ENCODE measurements at regions of chr9 and their contacts with region 1.

Region 1: DNA sequence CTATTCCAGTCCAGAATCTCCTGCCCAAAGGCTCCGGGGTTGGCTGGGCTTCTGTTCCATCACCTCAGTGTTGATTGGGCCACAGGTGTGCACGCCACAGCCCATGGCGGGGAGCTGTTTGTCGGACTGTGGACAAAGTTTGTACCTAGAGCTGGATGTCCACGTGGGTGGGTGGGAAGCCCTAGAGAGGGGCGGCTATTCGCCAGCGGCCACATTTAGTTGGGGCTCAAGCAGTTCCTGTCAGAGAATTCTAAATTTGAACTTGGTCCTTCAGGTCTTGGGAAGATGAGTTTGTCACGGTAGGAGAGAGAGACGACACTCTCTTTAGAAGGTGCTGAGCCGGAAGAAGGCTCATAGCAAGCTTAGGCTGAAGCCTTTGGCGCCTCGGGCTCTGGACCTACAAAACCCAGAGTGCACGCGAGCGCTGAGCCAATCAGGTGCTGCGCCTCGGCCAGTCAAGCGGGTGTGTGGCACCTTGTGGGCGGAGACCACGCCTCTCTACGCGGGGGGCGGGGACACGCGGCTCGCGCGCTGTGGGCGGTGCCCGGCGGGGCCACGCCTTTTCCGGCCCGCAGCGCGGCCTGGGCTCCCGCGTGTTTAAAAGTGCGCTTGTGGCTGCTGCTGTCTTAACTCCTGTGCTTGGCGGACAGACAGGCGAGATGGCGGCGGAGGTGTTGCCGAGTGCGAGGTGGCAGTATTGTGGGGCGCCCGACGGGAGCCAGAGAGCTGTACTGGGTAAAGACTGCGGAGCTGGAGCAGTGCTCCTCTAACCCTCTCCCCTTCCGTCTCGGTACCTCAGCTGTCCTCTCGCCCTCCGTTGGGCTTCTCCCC is at the start of gene POLR1E:
- DNase-seq: peak; percentile 91 to 97 (median 96)
- ATAC-seq: peak; percentile 94 to 97
- H3K4me3 Mint-ChIP-seq: peak within 1 kb of the TSS; percentile 91 to 100 (median 94)
- H3K27ac Mint-ChIP-seq: peak within 1 kb of the TSS; percentile 89 to 98 (median 94)
- H3K4me1 Mint-ChIP-seq: peaks cover 23 to 44% (median 41%) of the 10 kb centered on the region in 4 donors
- H3K27me3 Mint-ChIP-seq: peaks cover 6 to 13% (median 7%) of the 10 kb centered on the region in 5 donors
- polyA plus RNA-seq, gene POLR1E: 13.3 to 21.2 (median 17.4) TPM

Region 2: GRCh38 chr9:37422289-37423104 is 63.1 kb before region 1 on chr9 and contains the start of gene GRHPR:
- POLR2A ChIA-PET with region 1: interaction called, 15 read pairs
- DNase-seq: peak; percentile 79 to 90 (median 84)
- ATAC-seq: peak; percentile 97 to 98
- H3K4me3 Mint-ChIP-seq: peak within 1 kb of the TSS; percentile 91 to 98 (median 94)
- H3K27ac Mint-ChIP-seq: peak within 1 kb of the TSS; percentile 92 to 98 (median 96)
- H3K4me1 Mint-ChIP-seq: peaks cover 10 to 35% (median 26%) of the 10 kb centered on the region in 4 donors
- H3K27me3 Mint-ChIP-seq: no peaks in the 10 kb centered on the region
- polyA plus RNA-seq, gene GRHPR: 71.5 to 89.3 (median 74.4) TPM

Region 3: GRCh38 chr9:37465249-37466036 is 20.2 kb before region 1 on chr9 and contains the start of gene ZBTB5:
- POLR2A ChIA-PET with region 1: interaction called, 56 read pairs
- DNase-seq: peak; percentile 96 to 100 (median 99)
- ATAC-seq: peak; percentile 81
- H3K4me3 Mint-ChIP-seq: peak within 1 kb of the TSS; percentile 94 to 98 (median 96)
- H3K27ac Mint-ChIP-seq: peak within 1 kb of the TSS; percentile 93 to 99 (median 98)
- H3K4me1 Mint-ChIP-seq: peaks cover 20 to 46% (median 39%) of the 10 kb centered on the region in 4 donors
- H3K27me3 Mint-ChIP-seq: no peaks in the 10 kb centered on the region
- polyA plus RNA-seq, gene ZBTB5: 0.50 to 0.83 (median 0.64) TPM

Region 4: GRCh38 chr9:37565661-37566618 is 80.3 kb after region 1 on chr9:
- POLR2A ChIA-PET with region 1: no interaction called
- DNase-seq: no peak
- ATAC-seq: no peak
- H3K4me3 Mint-ChIP-seq: peak overlapping the region in 1 of 10 donors; percentile 15
- H3K27ac Mint-ChIP-seq: peak overlapping the region in 1 of 10 donors; percentile 32
- H3K4me1 Mint-ChIP-seq: peaks cover 0 to 48% (median 2%) of the 10 kb centered on the region in 4 donors
- H3K27me3 Mint-ChIP-seq: peaks cover 0 to 2% (median 0%) of the 10 kb centered on the region in 5 donors